ENCODE measurements at regions of chr5 and their contacts with region 1.

Region 1: DNA sequence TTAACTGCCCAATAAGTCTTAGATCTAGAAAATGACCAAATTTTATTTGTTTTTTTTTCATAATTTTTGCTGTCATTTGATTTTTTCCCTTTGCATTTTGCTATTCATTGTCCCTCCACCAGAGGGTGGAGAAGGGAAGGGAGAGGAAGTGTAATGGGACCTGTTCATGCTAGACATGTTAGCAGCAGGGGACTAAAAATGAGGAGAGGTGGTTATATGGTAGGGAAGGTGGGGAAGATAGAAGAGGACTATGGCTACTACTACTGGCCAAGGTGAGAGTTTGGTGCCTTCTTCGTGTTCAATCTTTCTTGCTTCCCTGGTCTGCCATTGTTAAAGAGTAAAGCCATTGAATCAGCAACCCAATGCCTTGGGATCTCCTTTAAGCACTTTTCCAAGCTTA is 6.4 kb downstream of the GRIA1 start:
- DNase-seq: no peak
- ATAC-seq: no peak
- H3K4me3 ChIP-seq: no peak overlapping the region
- H3K27ac ChIP-seq: no peak overlapping the region
- H3K4me1 ChIP-seq: no peaks in the 10 kb centered on the region
- H3K27me3 ChIP-seq: no peaks in the 10 kb centered on the region

Region 2: GRCh38 chr5:153959134-153959957 is 462.5 kb after region 1 on chr5:
- intact Hi-C with region 1: loop called (anchors 5 to 10 kb)
- DNase-seq: no peak
- ATAC-seq: peak in 1 of 2 donors; percentile 11
- H3K4me3 ChIP-seq: no peak overlapping the region
- H3K27ac ChIP-seq: no peak overlapping the region
- H3K4me1 ChIP-seq: no peaks in the 10 kb centered on the region
- H3K27me3 ChIP-seq: no peaks in the 10 kb centered on the region